CD4-positive, alpha-beta T cell (primary cell): ENCODE measurements at regions of chr17 and their contacts with region 1.

Region 1: GRCh38 chr17:82098072-82098821 is at the start of gene FASN:
- DNase-seq: peak; percentile 80 to 97 (median 91)
- ATAC-seq: peak; percentile 68
- H3K4me3 ChIP-seq: peak within 1 kb of the TSS; percentile 54
- H3K4me3 Mint-ChIP-seq: peak within 1 kb of the TSS; percentile 83
- H3K27ac ChIP-seq: peak within 1 kb of the TSS; percentile 58 to 73
- H3K27ac Mint-ChIP-seq: peak within 1 kb of the TSS; percentile 80
- H3K4me1 ChIP-seq: peaks cover 28% of the 10 kb centered on the region
- H3K4me1 Mint-ChIP-seq: peaks cover 3% of the 10 kb centered on the region
- H3K27me3 ChIP-seq: no peaks in the 10 kb centered on the region
- H3K27me3 Mint-ChIP-seq: no peaks in the 10 kb centered on the region
- CTCF ChIP-seq: no peak
- total RNA-seq, gene FASN: 168 to 174 TPM

Region 2: GRCh38 chr17:82022981-82023374 is 75.3 kb before region 1 on chr17 and contains the start of gene LRRC45:
- CTCF ChIA-PET with region 1: no interaction called
- POLR2A ChIA-PET with region 1: interaction called, 3 read pairs
- intact Hi-C with region 1: loop called in 1 of 2 experiments (anchors 2 kb)
- DNase-seq: peak; percentile 99 to 100 (median 100)
- ATAC-seq: peak; percentile 94
- H3K4me3 ChIP-seq: peak within 1 kb of the TSS; percentile 71
- H3K4me3 Mint-ChIP-seq: peak within 1 kb of the TSS; percentile 92
- H3K27ac ChIP-seq: peak within 1 kb of the TSS in 1 of 2 donors; percentile 46
- H3K27ac Mint-ChIP-seq: peak within 1 kb of the TSS; percentile 69
- H3K4me1 ChIP-seq: peaks cover 47% of the 10 kb centered on the region
- H3K4me1 Mint-ChIP-seq: peaks cover 21% of the 10 kb centered on the region
- H3K27me3 ChIP-seq: no peaks in the 10 kb centered on the region
- H3K27me3 Mint-ChIP-seq: no peaks in the 10 kb centered on the region
- CTCF ChIP-seq: no peak
- total RNA-seq, gene LRRC45: 17.7 to 17.9 TPM

Region 3: DNA sequence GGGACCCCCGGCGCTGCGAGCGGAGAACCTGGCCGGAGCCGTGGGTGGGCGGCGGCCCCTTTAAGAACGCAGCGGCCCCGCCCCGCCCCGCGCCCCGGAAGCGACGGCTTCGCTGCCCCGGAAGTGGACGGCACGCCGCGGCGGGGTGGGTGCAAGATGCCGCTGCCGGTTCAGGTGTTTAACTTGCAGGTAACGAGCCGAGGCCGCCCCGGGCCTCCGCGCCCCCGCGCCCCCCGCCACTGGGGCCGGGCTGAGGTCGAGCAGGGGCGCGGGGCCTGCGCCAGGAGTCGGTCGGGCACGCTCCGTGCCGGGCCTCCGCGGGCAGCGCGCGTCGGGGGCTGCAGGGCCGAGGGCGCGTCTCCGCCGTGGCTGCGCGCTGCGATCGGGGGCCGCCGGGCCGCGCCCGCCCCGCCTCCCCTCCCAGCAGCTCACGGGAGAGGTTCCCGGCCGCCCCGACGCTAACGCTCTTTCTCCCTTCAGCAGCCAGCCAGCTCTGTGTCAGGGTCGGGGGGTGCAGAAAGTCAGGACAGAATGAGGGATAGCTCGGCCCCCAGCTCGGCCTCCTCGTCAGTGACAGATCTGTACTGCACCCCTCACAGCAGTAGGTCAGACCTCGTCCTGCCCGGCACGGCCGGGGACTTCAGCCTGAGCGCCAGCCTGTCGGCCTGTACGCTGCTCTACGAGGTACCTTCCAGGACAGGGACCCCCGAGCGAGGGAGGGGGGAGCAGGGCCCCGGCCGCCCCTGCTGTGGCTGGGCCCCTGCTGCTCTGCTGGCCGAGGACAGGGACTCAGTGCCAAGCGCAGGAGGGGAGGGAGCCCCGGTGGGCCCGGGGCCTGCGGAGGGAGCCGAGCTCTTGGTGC is 46.2 kb before region 1 on chr17 and contains the starts of genes GPS1 and RFNG:
- CTCF ChIA-PET with region 1: no interaction called
- POLR2A ChIA-PET with region 1: no interaction called
- intact Hi-C with region 1: loop called in 1 of 2 experiments (anchors 5 kb)
- DNase-seq: peak; percentile 68 to 90 (median 80)
- ATAC-seq: peak; percentile 92
- H3K4me3 ChIP-seq: peak within 1 kb of the TSS; percentile 75
- H3K4me3 Mint-ChIP-seq: peak within 1 kb of the TSS; percentile 86
- H3K27ac ChIP-seq: no peak within 1 kb of the TSS
- H3K27ac Mint-ChIP-seq: peak within 1 kb of the TSS; percentile 71
- H3K4me1 ChIP-seq: peaks cover 41% of the 10 kb centered on the region
- H3K4me1 Mint-ChIP-seq: peaks cover 14% of the 10 kb centered on the region
- H3K27me3 ChIP-seq: no peaks in the 10 kb centered on the region
- H3K27me3 Mint-ChIP-seq: no peaks in the 10 kb centered on the region
- CTCF ChIP-seq: no peak
- total RNA-seq, gene GPS1: 64.6 to 69.3 TPM
- total RNA-seq, gene RFNG: 28.1 to 31.2 TPM

Region 4: GRCh38 chr17:82077617-82078358 is 20.5 kb before region 1 on chr17:
- CTCF ChIA-PET with region 1: no interaction called
- POLR2A ChIA-PET with region 1: no interaction called
- intact Hi-C with region 1: no loop called
- DNase-seq: peak in 1 of 14 experiments; percentile 7
- ATAC-seq: peak; percentile 6
- H3K4me3 ChIP-seq: no peak overlapping the region
- H3K4me3 Mint-ChIP-seq: peak overlapping the region; percentile 45
- H3K27ac ChIP-seq: no peak overlapping the region
- H3K27ac Mint-ChIP-seq: no peak overlapping the region
- H3K4me1 ChIP-seq: no peaks in the 10 kb centered on the region
- H3K4me1 Mint-ChIP-seq: no peaks in the 10 kb centered on the region
- H3K27me3 ChIP-seq: no peaks in the 10 kb centered on the region
- H3K27me3 Mint-ChIP-seq: no peaks in the 10 kb centered on the region
- CTCF ChIP-seq: no peak

Region 5: DNA sequence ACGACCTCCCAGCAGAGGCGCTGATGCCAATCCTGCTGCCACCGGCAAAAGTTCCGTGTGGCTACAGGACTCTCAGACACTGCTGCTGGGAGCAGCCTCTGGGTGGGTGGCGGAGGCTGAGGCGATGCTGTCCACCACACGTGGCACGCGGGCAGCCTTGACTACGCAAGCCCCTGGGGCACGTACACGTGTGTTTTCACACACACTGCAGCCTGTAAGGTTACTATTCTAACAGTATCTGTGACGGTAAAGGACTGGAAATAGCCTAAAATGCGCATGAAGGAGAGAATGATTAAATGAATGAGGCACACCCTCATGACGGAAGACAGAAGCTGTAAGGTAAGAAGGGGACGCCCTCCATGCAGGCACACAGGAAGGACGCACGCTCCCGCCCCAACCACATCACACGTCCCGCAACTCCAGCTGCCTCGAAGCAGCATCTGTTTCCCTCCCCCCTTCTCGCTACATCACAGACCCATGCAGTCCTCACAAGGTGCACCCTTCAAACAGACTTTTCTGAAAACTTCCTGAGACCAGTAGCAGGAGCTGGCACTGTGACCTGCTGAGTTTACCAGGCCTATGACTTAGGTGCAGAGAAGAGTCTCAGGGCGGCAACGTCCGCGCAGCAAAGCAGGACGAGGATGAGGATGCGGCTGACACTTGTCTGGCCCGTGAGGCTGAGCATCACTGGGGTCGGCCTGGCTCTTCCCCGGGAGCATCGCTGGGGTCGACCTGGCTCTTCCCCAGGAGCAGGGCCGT is 28.5 kb after region 1 on chr17:
- CTCF ChIA-PET with region 1: interaction called, 15 read pairs
- POLR2A ChIA-PET with region 1: interaction called, 44 read pairs
- intact Hi-C with region 1: loop called (anchors 1 to 2 kb)
- DNase-seq: peak; percentile 77 to 98 (median 88)
- ATAC-seq: peak; percentile 78
- H3K4me3 ChIP-seq: peak overlapping the region; percentile 40
- H3K4me3 Mint-ChIP-seq: peak overlapping the region; percentile 39
- H3K27ac ChIP-seq: peak overlapping the region; percentile 83 to 94
- H3K27ac Mint-ChIP-seq: peak overlapping the region; percentile 97
- H3K4me1 ChIP-seq: peaks cover 79% of the 10 kb centered on the region
- H3K4me1 Mint-ChIP-seq: peaks cover 76% of the 10 kb centered on the region
- H3K27me3 ChIP-seq: no peaks in the 10 kb centered on the region
- H3K27me3 Mint-ChIP-seq: no peaks in the 10 kb centered on the region
- CTCF ChIP-seq: peak; percentile 19

Region 6: DNA sequence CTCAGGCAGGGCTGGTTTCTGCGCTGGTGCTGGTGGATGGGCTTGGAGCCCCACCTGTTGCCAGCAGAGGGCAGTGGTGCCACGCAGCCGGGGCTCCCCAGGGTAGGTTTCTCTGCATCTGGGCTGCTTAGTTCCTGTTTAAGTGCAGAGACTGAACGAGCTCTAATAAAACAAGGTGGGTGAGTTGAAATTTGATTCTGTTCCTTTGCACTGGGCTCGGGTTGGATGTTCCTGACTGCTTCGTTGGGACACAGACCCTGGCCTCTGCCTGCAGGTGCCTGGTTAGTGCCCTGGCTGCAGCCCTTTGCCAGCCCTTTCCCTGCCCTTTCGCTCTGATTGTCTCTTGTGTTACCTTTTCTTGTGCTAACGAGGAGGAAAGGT is 683.6 kb after region 1 on chr17:
- CTCF ChIA-PET with region 1: no interaction called
- POLR2A ChIA-PET with region 1: no interaction called
- intact Hi-C with region 1: no loop called
- DNase-seq: peak; percentile 77 to 90 (median 86)
- ATAC-seq: peak; percentile 100
- H3K4me3 ChIP-seq: no peak overlapping the region
- H3K4me3 Mint-ChIP-seq: no peak overlapping the region
- H3K27ac ChIP-seq: no peak overlapping the region
- H3K27ac Mint-ChIP-seq: peak overlapping the region; percentile 69
- H3K4me1 ChIP-seq: peaks cover 13% of the 10 kb centered on the region
- H3K4me1 Mint-ChIP-seq: peaks cover 12% of the 10 kb centered on the region
- H3K27me3 ChIP-seq: no peaks in the 10 kb centered on the region
- H3K27me3 Mint-ChIP-seq: no peaks in the 10 kb centered on the region
- CTCF ChIP-seq: peak; percentile 97